Transverse colon (tissue), 4 donors: ENCODE measurements at regions of chr4 and their contacts with region 1.

Region 1: GRCh38 chr4:81335122-81335912 is 120.3 kb upstream of the PRKG2 start:
- DNase-seq: no peak
- H3K4me3 ChIP-seq: no peak overlapping the region
- H3K27ac ChIP-seq: no peak overlapping the region
- H3K4me1 ChIP-seq: no peaks in the 10 kb centered on the region
- H3K27me3 ChIP-seq: no peaks in the 10 kb centered on the region
- CTCF ChIP-seq: no peak
- EP300 ChIP-seq: no peak
- POLR2A ChIP-seq: no peak

Region 2: GRCh38 chr4:81084029-81084428 is 251.3 kb before region 1 on chr4:
- in situ Hi-C with region 1: loop called in 1 of 4 experiments (anchors 10 kb)
- intact Hi-C with region 1: no loop called
- DNase-seq: no peak
- H3K4me3 ChIP-seq: no peak overlapping the region
- H3K27ac ChIP-seq: no peak overlapping the region
- H3K4me1 ChIP-seq: no peaks in the 10 kb centered on the region
- H3K27me3 ChIP-seq: no peaks in the 10 kb centered on the region
- CTCF ChIP-seq: peak in 4 of 5 experiments; percentile 42 to 69 (median 48)
- EP300 ChIP-seq: no peak
- POLR2A ChIP-seq: no peak